ENCODE measurements at regions of chr16 and their contacts with region 1.

Region 1: GRCh38 chr16:68528686-68529379 is 10.3 kb upstream of the ZFP90 start:
- DNase-seq: no peak
- H3K4me3 ChIP-seq: no peak overlapping the region
- H3K27ac ChIP-seq: no peak overlapping the region
- H3K4me1 ChIP-seq: peaks cover 22% of the 10 kb centered on the region
- H3K27me3 ChIP-seq: no peaks in the 10 kb centered on the region
- CTCF ChIP-seq: peak; percentile 82 to 96 (median 83)
- POLR2A ChIP-seq: no peak

Region 2: GRCh38 chr16:68264128-68265077 is 264.4 kb before region 1 on chr16 and contains the start of gene SLC7A6:
- intact Hi-C with region 1: no loop called
- DNase-seq: no peak
- H3K4me3 ChIP-seq: peak within 1 kb of the TSS; percentile 71 to 93
- H3K27ac ChIP-seq: peak within 1 kb of the TSS; percentile 99
- H3K4me1 ChIP-seq: peaks cover 50% of the 10 kb centered on the region
- H3K27me3 ChIP-seq: no peaks in the 10 kb centered on the region
- CTCF ChIP-seq: peak; percentile 29 to 52 (median 48)
- POLR2A ChIP-seq: peak in 1 of 2 donors; percentile 73
- total RNA-seq, gene SLC7A6: 35.1 TPM

Region 3: GRCh38 chr16:68843482-68844210 is 314.8 kb after region 1 on chr16 and contains the start of gene TANGO6:
- intact Hi-C with region 1: loop called (anchors 10 kb)
- DNase-seq: no peak
- H3K4me3 ChIP-seq: peak within 1 kb of the TSS; percentile 74 to 79
- H3K27ac ChIP-seq: peak within 1 kb of the TSS; percentile 73
- H3K4me1 ChIP-seq: peaks cover 7% of the 10 kb centered on the region
- H3K27me3 ChIP-seq: no peaks in the 10 kb centered on the region
- CTCF ChIP-seq: no peak
- POLR2A ChIP-seq: no peak
- total RNA-seq, gene TANGO6: 21.9 TPM

Region 4: GRCh38 chr16:69123910-69124309 is 595.1 kb after region 1 on chr16:
- intact Hi-C with region 1: loop called (anchors 10 kb)
- DNase-seq: no peak
- H3K4me3 ChIP-seq: no peak overlapping the region
- H3K27ac ChIP-seq: no peak overlapping the region
- H3K4me1 ChIP-seq: peaks cover 5% of the 10 kb centered on the region
- H3K27me3 ChIP-seq: no peaks in the 10 kb centered on the region
- CTCF ChIP-seq: peak; percentile 62 to 68 (median 66)
- POLR2A ChIP-seq: no peak

Measured in vagina (tissue), 2 donors.